ENCODE measurements at regions of chrX and their contacts with region 1.

Region 1: DNA sequence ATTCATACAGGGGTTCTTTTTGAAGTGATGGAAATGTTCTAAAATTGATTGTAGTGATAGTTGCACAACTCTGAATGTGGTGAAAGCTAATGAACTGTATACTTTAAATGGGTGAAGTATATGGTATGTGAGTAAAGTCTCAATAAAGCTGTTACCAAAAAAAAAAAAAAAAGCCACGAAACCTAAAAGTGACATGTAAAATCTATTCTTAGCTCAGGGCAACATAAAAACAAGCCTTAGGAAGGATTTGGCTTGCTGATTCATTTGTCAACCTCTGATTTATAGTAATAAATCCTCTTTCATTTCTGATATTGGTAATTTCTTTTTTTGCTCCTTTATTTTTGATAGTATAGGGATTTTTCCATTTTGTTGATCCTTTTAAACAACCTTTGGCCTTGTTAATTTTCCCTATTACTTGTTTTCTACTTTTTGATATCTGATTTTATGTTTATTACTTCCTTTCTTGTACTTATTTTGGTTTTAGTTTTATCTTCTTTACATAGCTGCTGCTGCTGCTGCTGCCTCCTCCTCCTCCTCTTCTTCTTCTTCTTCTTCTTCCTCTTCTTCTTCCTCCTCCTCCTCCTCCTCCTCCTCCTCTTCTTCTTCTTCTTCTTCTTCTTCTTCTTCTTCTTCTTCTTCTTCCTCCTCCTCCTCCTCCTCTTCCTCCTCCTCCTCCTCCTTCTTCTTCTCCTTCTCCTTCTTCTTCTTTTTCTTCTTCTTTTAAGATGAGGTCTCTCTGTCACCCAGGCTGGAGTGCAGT is 79.4 kb downstream of the ADGRG4 start:
- DNase-seq: no peak

Region 2: DNA sequence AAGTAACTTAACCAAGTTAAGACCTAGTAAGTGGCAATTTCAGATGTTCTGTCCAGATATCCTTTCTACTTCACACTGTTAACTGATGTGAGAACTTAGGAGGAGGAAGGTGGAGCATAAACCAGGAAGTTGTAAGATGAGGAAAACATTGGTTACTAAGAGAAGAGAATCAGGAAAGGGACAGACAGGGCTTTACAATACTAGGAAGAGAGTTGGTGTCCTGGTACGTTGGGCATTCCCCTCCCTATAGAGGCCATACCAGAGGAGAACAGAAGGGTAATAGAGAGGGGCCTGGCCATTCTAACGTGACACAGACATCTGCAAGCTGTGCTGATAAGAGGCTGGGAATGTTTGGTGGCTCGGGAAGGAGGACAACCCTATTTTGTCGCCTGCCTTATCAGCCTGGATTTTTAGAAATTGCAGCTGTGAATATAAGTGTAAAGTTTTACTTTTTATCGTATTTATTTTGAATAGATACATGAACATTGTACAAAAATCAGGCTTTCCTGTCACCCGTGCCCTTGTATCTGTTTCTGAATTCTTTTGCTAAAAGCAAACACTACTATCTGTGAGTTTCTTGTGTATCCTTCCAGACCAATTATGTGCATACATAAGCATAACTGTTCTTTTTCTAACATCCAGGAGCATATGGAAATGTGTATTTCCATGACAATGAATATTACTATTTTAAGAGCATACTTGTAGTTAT is 1973.7 kb before region 1 on chrX:
- intact Hi-C with region 1: no loop called
- DNase-seq: no peak

Region 3: GRCh38 chrX:136347706-136348105 is 32.5 kb before region 1 on chrX:
- intact Hi-C with region 1: loop called in 1 of 2 experiments (anchors 2 kb)
- DNase-seq: no peak

Region 4: GRCh38 chrX:136588041-136588788 is 208.0 kb after region 1 on chrX:
- intact Hi-C with region 1: no loop called
- DNase-seq: no peak

Region 5: DNA sequence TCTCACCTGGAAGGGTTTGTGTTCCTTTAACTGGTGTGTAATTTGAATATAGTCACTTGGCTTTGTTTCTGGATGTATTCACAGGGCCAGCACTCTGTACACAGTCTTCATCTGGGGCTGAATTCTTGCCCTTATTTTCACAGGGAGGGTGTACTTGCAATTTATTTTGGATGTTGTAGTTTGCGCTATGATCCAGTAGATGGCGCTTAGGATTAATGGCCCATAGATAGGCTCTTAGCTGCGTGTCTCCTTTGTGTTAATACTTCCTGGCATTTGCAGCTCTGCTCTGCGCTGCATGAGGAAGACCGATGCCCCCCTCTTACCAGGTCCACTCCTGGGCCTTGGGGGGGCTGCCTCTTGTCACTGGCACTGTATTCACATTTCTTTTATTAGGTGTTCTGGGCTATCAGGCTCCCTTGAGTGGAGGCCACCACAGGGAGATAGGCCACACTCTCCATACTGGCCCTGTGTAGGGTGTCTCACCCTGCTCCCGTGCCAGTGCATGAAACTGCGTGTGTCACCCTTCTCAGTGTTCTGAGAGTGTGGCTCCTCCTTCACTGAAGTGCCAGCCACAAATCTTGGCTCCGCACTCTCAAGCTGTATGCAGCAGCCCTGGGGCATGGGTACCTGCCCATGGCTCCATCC is 1748.0 kb after region 1 on chrX:
- intact Hi-C with region 1: no loop called
- DNase-seq: no peak